Activated B cell treated with CpG ODN at 0.5 μM for 24 hours (primary cell): ENCODE measurements at regions of chr22 and their contacts with region 1.

Region 1: DNA sequence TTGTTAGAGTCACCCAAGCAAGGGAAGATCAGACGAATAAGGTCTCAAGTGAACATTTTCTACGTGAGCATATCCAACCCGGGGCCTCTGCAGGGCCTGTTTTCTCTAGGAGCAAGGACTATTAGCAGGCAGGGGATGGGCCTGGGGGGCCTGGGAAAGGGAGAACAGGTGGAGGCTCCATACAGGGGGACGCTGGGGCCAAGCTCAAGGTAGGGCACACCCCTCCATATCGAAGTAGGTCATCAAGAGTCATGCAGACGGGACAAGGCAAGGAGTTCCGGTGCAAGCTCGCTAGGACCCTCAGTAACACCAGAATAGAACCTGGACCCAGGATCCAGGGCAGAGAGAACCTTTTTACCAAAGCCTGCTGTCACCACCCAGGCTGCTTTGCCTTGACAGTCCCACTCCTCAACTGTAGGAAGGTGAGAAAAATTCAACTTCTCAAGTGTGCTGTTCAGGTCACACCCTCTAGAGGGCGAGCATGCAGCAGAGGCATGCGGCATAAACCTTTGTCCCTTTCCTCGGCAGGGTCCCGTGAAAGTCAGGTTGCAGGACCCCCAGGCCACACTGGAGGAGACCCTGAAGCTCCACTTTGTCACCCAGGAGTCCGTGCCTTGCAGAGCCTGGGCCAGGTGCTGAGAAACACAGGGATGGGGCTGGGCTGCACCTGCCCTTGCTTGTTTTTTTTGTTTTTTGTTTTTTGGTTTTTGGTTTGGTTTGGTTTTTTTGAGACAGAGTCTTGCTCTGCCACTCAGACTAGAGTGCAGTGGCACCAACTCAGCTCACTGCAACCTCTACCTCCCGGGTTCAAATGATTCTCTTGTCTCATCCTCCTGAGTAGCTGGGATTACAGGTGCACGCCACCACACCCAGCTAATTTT is 8.6 kb upstream of the APOBEC3B start:
- DNase-seq: no peak
- ATAC-seq: peak; percentile 98
- H3K4me3 Mint-ChIP-seq: no peak overlapping the region
- H3K27ac Mint-ChIP-seq: peak overlapping the region; percentile 24
- H3K4me1 Mint-ChIP-seq: peaks cover 2% of the 10 kb centered on the region
- H3K27me3 Mint-ChIP-seq: peaks cover 6% of the 10 kb centered on the region
- CTCF ChIP-seq: no peak

Region 2: GRCh38 chr22:38890377-38890776 is 83.2 kb before region 1 on chr22:
- CTCF ChIA-PET with region 1: no interaction called
- POLR2A ChIA-PET with region 1: no interaction called
- intact Hi-C with region 1: no loop called
- DNase-seq: no peak
- ATAC-seq: no peak
- H3K4me3 Mint-ChIP-seq: no peak overlapping the region
- H3K27ac Mint-ChIP-seq: no peak overlapping the region
- H3K4me1 Mint-ChIP-seq: no peaks in the 10 kb centered on the region
- H3K27me3 Mint-ChIP-seq: peaks cover 22% of the 10 kb centered on the region
- CTCF ChIP-seq: no peak

Region 3: DNA sequence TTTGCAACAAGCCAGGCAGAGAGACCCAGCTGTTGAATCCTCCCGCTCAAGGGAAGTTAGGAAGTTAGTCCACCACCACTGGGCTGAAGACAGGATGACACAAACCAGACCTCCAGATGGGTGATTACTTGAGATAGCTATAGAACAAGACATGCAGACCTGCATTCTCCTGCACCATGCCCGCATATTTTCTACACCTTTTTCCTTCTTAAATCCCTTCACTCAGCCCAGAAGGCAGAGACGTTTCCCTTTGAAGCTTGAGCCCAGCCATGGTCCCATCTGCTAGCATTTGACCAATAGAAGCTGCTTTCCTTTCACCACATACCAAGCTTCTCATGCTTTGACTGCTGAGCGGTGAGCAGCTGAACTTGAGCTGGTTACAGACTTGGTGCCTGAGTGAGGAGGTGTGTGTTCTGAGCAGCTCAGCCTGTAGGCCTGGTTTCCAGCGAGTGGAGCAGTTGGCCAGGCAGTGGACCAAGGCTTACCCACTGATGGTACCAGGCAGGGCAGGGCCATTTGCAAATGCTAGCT is 72.4 kb before region 1 on chr22:
- CTCF ChIA-PET with region 1: no interaction called
- POLR2A ChIA-PET with region 1: no interaction called
- intact Hi-C with region 1: no loop called
- DNase-seq: no peak
- ATAC-seq: no peak
- H3K4me3 Mint-ChIP-seq: peak overlapping the region; percentile 35
- H3K27ac Mint-ChIP-seq: no peak overlapping the region
- H3K4me1 Mint-ChIP-seq: peaks cover 12% of the 10 kb centered on the region
- H3K27me3 Mint-ChIP-seq: peaks cover 4% of the 10 kb centered on the region
- CTCF ChIP-seq: no peak

Region 4: GRCh38 chr22:38927033-38927781 is 46.3 kb before region 1 on chr22:
- CTCF ChIA-PET with region 1: no interaction called
- POLR2A ChIA-PET with region 1: no interaction called
- intact Hi-C with region 1: loop called (anchors 5 kb)
- DNase-seq: peak; percentile 40
- ATAC-seq: peak; percentile 87
- H3K4me3 Mint-ChIP-seq: peak overlapping the region; percentile 67
- H3K27ac Mint-ChIP-seq: no peak overlapping the region
- H3K4me1 Mint-ChIP-seq: peaks cover 4% of the 10 kb centered on the region
- H3K27me3 Mint-ChIP-seq: peaks cover 35% of the 10 kb centered on the region
- CTCF ChIP-seq: no peak

Region 5: GRCh38 chr22:38996105-38996504 is 22.6 kb after region 1 on chr22:
- CTCF ChIA-PET with region 1: no interaction called
- POLR2A ChIA-PET with region 1: no interaction called
- intact Hi-C with region 1: no loop called
- DNase-seq: no peak
- ATAC-seq: no peak
- H3K4me3 Mint-ChIP-seq: no peak overlapping the region
- H3K27ac Mint-ChIP-seq: no peak overlapping the region
- H3K4me1 Mint-ChIP-seq: peaks cover 5% of the 10 kb centered on the region
- H3K27me3 Mint-ChIP-seq: peaks cover 12% of the 10 kb centered on the region
- CTCF ChIP-seq: no peak

Region 6: DNA sequence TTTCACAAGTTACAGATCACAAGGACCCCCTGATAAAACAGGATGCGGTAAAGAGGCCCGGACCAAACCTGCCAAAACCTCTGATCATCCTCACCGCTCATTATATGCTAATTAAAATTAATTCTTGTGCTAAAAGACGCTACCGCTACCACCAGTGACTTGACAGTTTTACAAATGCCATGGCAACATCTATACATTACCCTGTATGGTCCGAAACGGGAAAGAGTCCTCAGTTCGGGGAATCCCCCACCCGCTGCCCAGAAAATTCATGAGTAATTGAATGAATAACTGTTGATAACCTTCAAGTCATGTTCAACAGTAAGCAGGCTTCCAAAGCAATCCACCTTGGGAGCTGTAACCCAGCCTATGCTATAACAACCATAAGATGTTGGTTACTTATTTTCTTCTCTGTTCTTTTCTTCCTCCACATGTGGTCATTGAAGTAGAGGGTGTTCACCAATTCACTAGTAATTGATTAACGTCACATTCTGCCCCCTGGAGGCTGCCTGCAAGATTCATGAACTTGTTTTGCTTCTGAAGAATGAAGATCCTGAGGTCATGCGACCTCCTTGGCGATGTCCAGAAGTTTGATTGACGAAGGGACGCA is 144.2 kb after region 1 on chr22:
- CTCF ChIA-PET with region 1: interaction called, 3 read pairs
- POLR2A ChIA-PET with region 1: no interaction called
- intact Hi-C with region 1: loop called (anchors 1 kb)
- DNase-seq: peak; percentile 37
- ATAC-seq: peak; percentile 64
- H3K4me3 Mint-ChIP-seq: peak overlapping the region; percentile 67
- H3K27ac Mint-ChIP-seq: peak overlapping the region; percentile 86
- H3K4me1 Mint-ChIP-seq: peaks cover 52% of the 10 kb centered on the region
- H3K27me3 Mint-ChIP-seq: no peaks in the 10 kb centered on the region
- CTCF ChIP-seq: no peak